ENCODE measurements at regions of chr1 and their contacts with region 1.

Region 1: DNA sequence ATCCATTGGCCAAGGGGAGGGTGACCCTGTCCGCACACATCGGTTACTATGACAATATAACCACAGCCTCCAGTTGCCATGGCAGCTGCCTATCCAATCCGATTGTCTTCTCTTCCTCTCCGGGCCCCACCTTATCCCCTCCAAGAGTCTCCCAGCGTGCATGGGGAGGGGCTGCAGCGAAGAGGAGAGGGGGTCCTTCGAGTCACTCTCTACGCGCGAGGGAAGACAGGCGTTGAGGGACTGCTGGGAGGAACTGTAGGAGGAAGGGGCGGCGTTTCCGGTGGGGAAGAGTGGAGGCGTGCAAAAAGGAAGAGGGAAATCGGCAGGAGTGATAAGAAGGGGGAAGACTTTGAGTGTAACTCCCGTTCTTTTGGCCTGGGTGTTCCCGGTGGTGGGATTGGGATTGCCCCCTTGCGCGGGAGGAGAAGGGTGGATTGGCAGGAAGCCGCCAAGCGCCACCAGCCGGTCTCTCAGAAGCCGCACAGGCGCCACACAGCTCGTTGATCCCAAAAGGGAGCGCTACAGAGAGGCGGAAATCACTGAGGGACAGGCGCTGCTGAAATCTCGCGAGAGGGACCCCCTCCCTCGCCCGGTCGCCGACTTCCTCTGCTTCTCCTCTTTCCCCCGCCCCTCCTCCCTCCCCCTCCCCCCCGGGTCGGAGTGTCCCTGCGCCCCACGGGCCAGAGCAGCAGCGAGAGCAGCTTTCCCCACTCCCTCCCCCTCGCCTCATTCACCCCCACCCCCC is 384 bp upstream of the SMG7 start:
- DNase-seq: peak; percentile 94 to 98 (median 96)
- ATAC-seq: peak; percentile 82
- H3K4me3 ChIP-seq: peak overlapping the region; percentile 87
- H3K27ac ChIP-seq: peak overlapping the region; percentile 99
- H3K4me1 ChIP-seq: peaks cover 26 to 31% of the 10 kb centered on the region in 2 experiments; a peak in 4 of 5 replicates
- H3K27me3 ChIP-seq: no peaks in the 10 kb centered on the region
- CTCF ChIP-seq: peak in 2 of 3 experiments; percentile 15 to 39; a peak in 3 of 6 replicates
- EP300 ChIP-seq: peak; percentile 63
- POLR2A ChIP-seq: no peak; the same call in 1 of the 2 replicates
- RAD21 ChIP-seq: no peak

Region 2: DNA sequence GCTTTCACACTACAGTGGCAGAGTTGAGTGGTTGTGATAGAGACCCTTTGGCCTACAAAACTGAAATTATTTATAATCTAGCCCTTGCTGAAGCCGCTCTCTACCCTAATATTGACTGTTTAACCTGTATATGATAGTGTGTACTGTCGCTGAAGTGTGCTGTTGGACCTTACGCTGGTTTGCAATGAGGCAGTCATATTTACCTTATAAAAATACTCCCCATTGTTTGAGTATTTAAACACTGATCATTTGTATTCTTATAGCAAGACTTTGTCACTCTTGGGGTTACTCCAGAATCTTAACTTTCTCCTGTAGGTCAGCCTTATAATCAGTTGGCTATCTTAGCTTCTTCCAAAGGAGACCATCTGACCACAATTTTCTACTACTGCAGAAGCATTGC is 56.7 kb after region 1 on chr1:
- CTCF ChIA-PET with region 1: no interaction called
- POLR2A ChIA-PET with region 1: no interaction called
- in situ Hi-C with region 1: no loop called
- intact Hi-C with region 1: no loop called
- DNase-seq: no peak
- ATAC-seq: no peak
- H3K4me3 ChIP-seq: no peak overlapping the region
- H3K27ac ChIP-seq: no peak overlapping the region
- H3K4me1 ChIP-seq: no peaks in the 10 kb centered on the region
- H3K27me3 ChIP-seq: no peaks in the 10 kb centered on the region
- CTCF ChIP-seq: no peak
- EP300 ChIP-seq: no peak
- POLR2A ChIP-seq: no peak
- RAD21 ChIP-seq: no peak

Region 3: DNA sequence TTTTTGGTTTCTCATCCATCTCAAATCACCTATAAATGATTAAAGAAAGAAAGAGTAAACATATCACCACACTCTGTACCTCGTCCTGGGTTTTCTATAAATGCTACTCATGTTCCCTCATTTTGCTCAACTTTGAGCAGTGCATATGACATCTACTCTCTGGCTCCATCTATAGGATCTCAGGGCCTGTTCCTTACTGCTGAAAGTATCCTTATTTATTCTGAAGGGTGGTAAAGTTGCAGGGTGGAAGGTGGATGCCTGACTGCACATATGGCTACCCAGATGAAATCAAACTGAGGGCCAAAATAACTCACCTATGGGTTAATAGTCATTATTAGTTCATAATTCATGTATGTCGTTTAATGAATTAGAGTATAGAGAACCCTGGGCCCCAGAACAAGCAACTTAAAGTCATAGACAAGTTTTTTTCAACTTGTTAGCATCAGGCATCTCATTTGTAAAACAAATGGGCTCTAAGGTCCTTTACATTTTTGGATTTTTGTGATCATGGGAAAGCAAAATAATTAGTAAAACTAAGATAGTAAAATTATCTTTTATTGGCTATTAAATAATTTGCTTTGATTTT is 71.8 kb after region 1 on chr1:
- CTCF ChIA-PET with region 1: no interaction called
- POLR2A ChIA-PET with region 1: no interaction called
- in situ Hi-C with region 1: no loop called
- intact Hi-C with region 1: loop called (anchors 1 kb)
- DNase-seq: peak in 3 of 4 experiments; percentile 27 to 56 (median 46)
- ATAC-seq: peak; percentile 97
- H3K4me3 ChIP-seq: no peak overlapping the region
- H3K27ac ChIP-seq: no peak overlapping the region
- H3K4me1 ChIP-seq: no peaks in the 10 kb centered on the region
- H3K27me3 ChIP-seq: no peaks in the 10 kb centered on the region
- CTCF ChIP-seq: peak; percentile 66 to 74 (median 66)
- EP300 ChIP-seq: no peak
- POLR2A ChIP-seq: no peak
- RAD21 ChIP-seq: peak; percentile 65 to 74

Region 4: DNA sequence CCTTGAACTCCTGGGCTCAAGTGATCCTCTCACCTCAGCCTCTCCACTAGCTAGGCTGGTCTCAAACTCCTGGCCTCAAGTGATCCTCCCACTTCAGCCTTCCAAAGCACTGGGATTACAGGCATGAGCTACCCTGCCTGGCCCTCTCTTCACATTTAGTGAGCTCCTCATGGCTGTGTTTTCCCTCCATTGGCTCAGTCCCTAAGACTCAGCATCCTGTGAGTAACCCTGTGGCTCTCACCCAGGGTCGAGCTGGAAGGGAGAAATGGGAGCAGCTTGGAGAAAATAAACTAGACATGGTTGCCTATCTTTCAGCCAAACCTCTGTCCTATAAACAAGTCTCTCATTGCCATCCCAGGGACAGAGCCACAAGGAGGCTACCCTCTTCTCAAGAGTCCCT is 100.8 kb after region 1 on chr1:
- CTCF ChIA-PET with region 1: no interaction called
- POLR2A ChIA-PET with region 1: no interaction called
- in situ Hi-C with region 1: no loop called
- intact Hi-C with region 1: no loop called
- DNase-seq: no peak
- ATAC-seq: no peak
- H3K4me3 ChIP-seq: no peak overlapping the region
- H3K27ac ChIP-seq: no peak overlapping the region
- H3K4me1 ChIP-seq: peaks cover 1 to 4% of the 10 kb centered on the region in 2 experiments; a peak in 3 of 5 replicates
- H3K27me3 ChIP-seq: peaks cover 45 to 55% of the 10 kb centered on the region in 2 experiments
- CTCF ChIP-seq: no peak
- EP300 ChIP-seq: no peak
- POLR2A ChIP-seq: no peak
- RAD21 ChIP-seq: no peak

Region 5: DNA sequence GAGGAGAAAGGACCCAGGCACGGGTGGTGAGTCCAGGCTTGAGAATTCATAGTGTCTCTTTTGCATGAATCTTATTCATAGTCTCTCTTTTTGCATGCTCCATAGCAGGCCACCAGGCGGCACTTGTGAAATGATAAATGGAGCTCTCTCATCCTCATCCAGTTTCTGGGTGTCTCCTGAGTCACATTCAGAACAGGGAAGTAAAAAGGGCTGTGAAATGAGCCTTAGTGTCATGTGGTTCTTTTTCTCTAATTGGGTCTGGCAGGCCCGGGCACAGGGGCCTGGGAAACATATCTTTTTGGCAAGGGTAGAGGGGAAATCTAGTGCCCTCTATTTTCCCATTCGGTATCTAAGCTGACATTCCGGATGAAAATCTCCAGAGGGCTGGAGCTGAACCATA is 137.4 kb after region 1 on chr1:
- CTCF ChIA-PET with region 1: no interaction called
- POLR2A ChIA-PET with region 1: no interaction called
- in situ Hi-C with region 1: no loop called
- intact Hi-C with region 1: loop called (anchors 5 kb)
- DNase-seq: peak in 2 of 4 experiments; percentile 27 to 63
- ATAC-seq: peak; percentile 89
- H3K4me3 ChIP-seq: no peak overlapping the region
- H3K27ac ChIP-seq: no peak overlapping the region
- H3K4me1 ChIP-seq: no peaks in the 10 kb centered on the region
- H3K27me3 ChIP-seq: peaks cover 4 to 22% of the 10 kb centered on the region in 2 experiments; a peak in 4 of 5 replicates
- CTCF ChIP-seq: peak; percentile 52 to 76 (median 76)
- EP300 ChIP-seq: no peak
- POLR2A ChIP-seq: no peak
- RAD21 ChIP-seq: peak; percentile 76 to 82

Region 6: DNA sequence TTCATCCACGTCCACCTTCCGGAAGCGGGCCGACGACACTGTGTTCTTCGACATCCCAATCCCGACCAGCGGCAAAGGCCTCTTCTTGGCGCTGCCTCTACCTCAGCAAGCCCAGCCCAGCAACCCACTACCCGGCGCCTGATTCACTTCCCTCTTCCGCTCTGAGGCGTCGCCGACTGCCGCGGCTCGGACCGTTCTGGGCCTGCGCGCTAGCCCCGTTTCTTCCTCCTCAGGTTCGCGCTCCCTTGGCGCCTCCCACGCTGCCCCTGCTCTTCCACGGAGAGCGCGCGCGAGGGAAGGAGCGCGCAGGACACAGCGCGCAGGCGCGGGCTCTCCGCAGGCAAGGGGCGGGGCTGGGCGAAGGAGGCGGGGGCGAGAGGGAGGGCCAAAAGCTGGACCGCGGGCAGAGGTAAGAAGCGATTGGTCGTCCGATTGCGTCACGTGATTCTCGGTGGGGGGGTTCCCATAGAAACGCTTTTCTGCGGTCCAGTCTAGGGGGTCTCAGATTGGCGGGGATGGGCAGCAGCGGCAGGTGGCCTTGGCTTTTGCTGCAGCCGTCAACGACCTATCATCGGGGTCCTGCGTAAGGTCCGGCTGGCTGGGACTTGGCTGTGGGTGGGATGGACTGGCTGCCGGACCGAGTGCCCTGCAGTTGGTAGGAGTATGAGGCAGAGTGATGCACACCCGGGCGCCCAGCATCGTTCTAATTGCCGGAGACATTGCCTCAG is 163.9 kb after region 1 on chr1 and contains the start of gene ARPC5:
- CTCF ChIA-PET with region 1: no interaction called
- POLR2A ChIA-PET with region 1: interaction called, 3 read pairs
- in situ Hi-C with region 1: no loop called
- intact Hi-C with region 1: loop called (anchors 1 kb)
- DNase-seq: peak; percentile 97 to 99 (median 98)
- ATAC-seq: peak; percentile 96
- H3K4me3 ChIP-seq: peak within 1 kb of the TSS; percentile 77
- H3K27ac ChIP-seq: peak within 1 kb of the TSS; percentile 73
- H3K4me1 ChIP-seq: peaks cover 0 to 15% of the 10 kb centered on the region in 2 experiments; a peak in 4 of 5 replicates
- H3K27me3 ChIP-seq: peaks cover 3 to 7% of the 10 kb centered on the region in 2 experiments; a peak in 2 of 5 replicates
- CTCF ChIP-seq: 0 out of 6 replicates have a peak, but pooled peaks of 1 of the 3 experiments have one; percentile 1
- EP300 ChIP-seq: no peak; the same call in 1 of the 2 replicates
- POLR2A ChIP-seq: peak; percentile 95
- RAD21 ChIP-seq: no peak
- polyA plus RNA-seq, gene ARPC5: 71.8 to 83.9 TPM

Region 7: DNA sequence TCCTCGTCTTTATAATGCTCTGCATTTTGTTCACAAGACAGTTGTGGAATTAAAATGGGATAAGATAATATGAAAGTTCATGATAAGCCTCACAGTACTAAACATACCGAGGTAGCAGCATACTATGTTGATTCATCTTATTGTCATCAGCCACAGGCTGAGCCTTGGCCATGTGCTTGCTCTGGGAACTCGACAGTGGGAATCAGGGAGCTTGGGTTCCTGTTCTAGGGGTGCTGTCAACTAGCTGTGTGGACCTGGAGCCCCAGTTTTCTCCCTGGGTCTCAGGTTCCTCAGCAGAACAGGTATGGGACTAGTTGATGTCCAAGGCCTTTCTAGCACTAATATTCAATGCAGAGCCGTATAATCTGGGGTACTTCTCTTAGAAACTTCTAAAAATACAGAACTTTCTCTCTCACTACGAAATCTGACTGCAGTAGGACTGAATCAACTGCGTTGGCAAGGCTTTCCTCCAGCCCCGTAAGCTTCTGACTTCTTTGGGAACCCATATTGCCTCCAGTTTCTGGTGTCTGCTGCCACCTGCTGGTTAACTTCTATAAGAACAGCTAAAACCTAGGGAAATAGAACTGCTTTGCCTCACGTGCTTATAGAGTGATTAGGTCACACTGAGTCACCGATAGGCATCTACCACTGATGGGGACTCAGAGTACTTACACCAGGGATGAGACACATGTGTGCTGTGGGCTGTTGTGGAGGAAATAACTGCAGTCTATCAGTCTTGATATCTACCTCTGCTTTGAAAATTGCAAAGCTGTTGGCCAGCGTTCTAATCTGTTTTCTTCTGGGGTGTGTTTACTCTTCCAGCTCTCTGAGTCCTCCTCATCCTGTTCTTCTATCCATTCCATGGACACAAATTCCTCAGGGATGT is 444.0 kb after region 1 on chr1:
- CTCF ChIA-PET with region 1: no interaction called
- POLR2A ChIA-PET with region 1: no interaction called
- in situ Hi-C with region 1: no loop called
- intact Hi-C with region 1: loop called (anchors 1 kb)
- DNase-seq: peak; percentile 78 to 90 (median 82)
- ATAC-seq: peak; percentile 93
- H3K4me3 ChIP-seq: no peak overlapping the region
- H3K27ac ChIP-seq: no peak overlapping the region
- H3K4me1 ChIP-seq: peaks cover 0 to 5% of the 10 kb centered on the region in 2 experiments; a peak in 2 of 5 replicates
- H3K27me3 ChIP-seq: peaks cover 0 to 10% of the 10 kb centered on the region in 2 experiments; a peak in 2 of 5 replicates
- CTCF ChIP-seq: peak; percentile 86 to 96 (median 89)
- EP300 ChIP-seq: peak; percentile 45
- POLR2A ChIP-seq: no peak
- RAD21 ChIP-seq: peak; percentile 91 to 95